Aorta (tissue), 5 donors: ENCODE measurements at regions of chr12 and their contacts with region 1.

Region 1: DNA sequence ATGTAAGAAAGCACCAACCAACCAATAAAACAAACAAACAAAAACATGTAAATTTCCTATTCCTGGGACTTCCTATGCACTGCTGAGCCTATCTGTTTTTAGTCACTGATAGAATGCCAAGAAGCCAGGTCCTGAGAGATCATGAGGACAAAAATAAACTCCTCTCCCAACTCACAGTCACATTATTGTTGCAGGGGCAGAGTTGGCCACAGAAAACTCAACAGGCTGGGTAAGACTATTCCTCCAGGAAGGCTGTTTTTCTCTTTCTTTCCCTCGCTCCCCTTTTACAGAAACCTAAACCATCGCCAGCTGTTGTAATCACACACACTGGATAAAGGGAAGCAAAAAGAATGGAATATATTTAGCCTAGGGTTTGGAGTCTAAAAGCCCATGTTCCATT is 55.8 kb upstream of the METAP2 start:
- DNase-seq: no peak
- ATAC-seq: peak; percentile 82
- H3K4me3 ChIP-seq: no peak overlapping the region
- H3K27ac ChIP-seq: peak overlapping the region; percentile 43 to 52
- H3K4me1 ChIP-seq: peaks cover 4 to 10% of the 10 kb centered on the region in 2 donors
- H3K27me3 ChIP-seq: no peaks in the 10 kb centered on the region

Region 2: DNA sequence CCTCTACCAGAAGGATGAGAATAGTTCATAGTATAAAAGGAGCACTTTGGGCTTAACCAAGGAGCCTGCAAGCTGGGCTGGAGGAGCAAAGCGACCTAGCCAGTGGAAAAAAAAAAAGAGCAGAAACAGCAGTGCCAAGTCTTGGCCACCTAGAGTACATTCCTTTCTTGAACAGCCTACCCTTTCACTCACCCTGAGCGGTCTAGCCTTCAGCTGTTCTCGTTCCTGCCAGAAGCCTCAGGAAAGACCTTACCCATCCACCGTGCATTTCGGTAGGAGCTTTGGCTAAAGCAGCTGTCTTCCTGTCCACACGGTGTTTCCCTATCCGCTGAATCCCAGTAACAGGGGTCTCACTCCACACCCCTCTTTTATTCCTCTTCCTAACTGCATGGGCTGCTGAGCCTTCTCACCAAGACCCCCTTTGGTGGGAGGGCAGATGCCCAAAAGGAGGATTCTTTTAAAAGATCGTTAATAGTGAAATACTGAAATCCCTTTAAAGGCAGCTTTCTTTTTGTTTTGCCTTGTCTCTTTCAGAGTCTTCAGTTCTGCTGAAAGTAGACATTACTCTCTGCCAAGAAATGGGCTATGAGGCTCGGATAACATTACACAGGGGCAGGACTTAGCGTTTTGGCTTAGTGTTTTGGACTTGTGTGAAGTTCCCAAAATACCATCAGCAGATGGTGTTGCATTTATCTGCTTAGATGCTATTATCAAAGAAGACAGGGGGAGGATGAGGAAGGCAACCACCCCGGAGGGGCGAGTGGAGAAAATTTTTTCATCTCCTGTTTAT is 32.7 kb before region 1 on chr12:
- intact Hi-C with region 1: loop called in 1 of 2 experiments (anchors 5 kb)
- DNase-seq: peak in 1 of 2 donors; percentile 52
- ATAC-seq: peak; percentile 86
- H3K4me3 ChIP-seq: peak overlapping the region; percentile 34 to 96
- H3K27ac ChIP-seq: peak overlapping the region; percentile 93 to 100
- H3K4me1 ChIP-seq: peaks cover 2 to 3% of the 10 kb centered on the region in 2 donors
- H3K27me3 ChIP-seq: no peaks in the 10 kb centered on the region

Region 3: DNA sequence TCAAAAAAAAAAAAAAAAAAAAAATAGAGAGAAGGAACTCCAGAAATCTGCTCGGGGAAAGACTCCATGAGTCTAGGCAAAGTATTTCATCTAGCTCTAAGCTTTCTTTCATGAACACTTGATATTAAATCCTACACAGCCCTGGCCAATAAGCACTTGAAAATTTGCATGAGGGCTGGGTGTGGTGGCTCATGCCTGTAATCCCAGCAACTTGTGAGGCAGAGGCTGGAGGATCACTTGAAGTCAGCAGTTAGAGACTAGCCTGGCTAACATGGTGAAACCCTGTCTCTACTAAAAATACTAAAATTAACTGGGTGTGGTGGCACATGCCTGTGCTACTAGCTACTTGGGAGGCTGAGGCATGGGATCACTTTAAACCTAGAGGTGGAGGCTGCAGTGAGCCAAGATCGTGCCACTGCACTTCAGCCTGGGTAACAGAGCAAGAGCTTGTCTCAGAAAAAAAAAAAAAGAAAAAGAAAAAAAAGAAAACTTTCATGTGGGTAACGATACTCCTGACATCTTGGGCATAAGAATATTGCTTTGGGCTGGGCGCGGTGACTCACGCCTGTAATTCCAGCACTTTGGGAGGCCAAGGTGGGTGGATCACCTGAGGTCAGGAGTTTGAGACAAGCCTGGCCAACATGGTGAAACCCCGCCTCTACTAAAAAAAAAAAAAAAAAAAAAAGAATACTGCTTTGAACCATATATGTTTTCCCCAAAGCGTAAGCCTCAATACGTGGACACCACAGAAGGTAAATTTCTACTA is 42.9 kb after region 1 on chr12:
- intact Hi-C with region 1: no loop called
- DNase-seq: no peak
- ATAC-seq: no peak
- H3K4me3 ChIP-seq: no peak overlapping the region
- H3K27ac ChIP-seq: no peak overlapping the region
- H3K4me1 ChIP-seq: no peaks in the 10 kb centered on the region
- H3K27me3 ChIP-seq: no peaks in the 10 kb centered on the region